AG04449 (cell line): ENCODE measurements at regions of chr12 and their contacts with region 1.

Region 1: GRCh38 chr12:127677537-127678131 is 589.3 kb upstream of the TMEM132C start:
- DNase-seq: peak; percentile 34
- H3K4me3 ChIP-seq: no peak overlapping the region
- CTCF ChIP-seq: peak; percentile 76

Region 2: DNA sequence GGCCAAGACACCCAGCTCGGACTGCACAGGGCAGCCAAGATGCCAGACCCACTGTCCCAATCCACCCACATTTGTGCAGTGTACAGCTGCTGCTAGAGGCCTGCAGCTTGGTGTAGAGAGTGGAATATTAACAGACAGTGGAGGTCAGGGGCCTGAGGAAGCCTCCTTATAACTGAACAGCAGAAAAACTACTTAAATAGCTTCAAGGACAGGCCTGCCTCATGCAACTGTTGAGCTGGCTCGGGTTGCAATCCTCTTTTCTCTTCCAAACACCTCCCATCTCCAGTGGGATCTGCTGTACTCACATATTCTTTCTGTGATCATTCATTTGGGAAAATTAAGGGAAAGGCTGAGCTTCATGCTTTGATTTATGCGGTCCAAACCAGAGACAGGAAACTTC is 453.9 kb before region 1 on chr12:
- CTCF ChIA-PET with region 1: no interaction called
- POLR2A ChIA-PET with region 1: no interaction called
- DNase-seq: no peak
- H3K4me3 ChIP-seq: no peak overlapping the region
- CTCF ChIP-seq: no peak

Region 3: DNA sequence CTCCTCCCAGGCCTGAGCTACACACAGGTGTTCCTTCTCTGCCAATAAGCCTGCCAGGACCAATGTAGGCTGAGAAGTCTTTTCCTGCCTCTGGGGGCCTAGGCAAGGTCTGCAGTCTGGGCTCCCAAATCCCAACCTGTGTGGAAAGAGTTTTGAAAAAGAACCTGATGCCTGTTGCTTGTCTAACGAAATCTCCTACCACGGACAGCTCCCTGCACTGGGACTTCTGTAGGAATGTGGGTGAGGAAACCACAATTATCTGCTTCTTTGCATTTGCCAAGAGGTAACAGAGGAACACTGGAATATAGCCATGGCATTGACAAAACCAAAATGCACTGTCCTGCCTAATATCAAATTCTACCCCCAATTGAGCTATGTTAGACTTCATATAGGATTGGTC is 287.7 kb before region 1 on chr12:
- CTCF ChIA-PET with region 1: interaction called, 21 read pairs
- POLR2A ChIA-PET with region 1: no interaction called
- DNase-seq: peak; percentile 36
- H3K4me3 ChIP-seq: no peak overlapping the region
- CTCF ChIP-seq: no peak

Region 4: DNA sequence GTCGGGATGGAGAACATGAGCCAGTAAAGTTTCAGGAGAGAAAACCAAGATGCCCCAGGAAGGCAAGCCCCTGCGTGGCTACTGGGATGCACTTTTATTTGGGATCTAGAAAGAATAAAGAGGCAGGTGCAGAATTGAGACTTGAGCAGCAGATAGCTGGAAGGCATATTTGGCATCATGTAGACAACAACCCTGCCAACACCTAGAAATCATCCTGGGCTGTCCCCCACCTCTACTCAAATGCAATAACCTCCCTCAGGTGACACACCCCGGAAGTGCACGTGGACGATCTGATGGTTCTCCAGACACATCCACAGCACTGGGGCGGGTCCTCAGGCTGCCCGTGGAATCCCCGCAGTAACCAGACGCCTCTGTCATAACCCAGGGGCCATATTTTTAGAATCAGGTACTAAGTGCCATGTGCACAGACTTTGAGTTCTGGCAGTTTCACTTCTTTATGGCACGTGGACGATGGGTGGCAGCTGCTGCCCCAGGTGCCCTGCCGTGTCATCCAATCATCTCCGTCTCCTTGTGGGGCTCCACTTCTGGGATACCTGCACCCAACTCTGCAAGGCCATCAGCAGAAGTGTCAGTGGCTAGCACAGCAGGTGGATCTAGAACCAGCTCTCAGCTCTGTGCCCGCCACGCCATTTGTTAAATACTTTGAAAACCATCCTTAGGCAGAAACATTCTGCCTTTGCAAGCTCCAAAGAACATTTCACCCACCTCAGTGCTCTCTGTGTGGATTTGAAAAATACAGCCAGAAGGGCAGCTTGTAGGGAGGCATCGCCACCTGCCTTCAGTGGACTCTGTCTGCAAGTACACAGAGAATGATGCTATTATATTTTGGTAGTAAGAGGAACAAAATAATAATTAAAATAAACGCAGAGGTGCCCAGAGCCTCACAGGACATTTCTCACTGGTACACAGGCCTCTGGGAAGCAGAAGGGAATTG is 182.4 kb before region 1 on chr12:
- CTCF ChIA-PET with region 1: interaction called, 20 read pairs
- POLR2A ChIA-PET with region 1: no interaction called
- DNase-seq: no peak
- H3K4me3 ChIP-seq: no peak overlapping the region
- CTCF ChIP-seq: no peak

Region 5: DNA sequence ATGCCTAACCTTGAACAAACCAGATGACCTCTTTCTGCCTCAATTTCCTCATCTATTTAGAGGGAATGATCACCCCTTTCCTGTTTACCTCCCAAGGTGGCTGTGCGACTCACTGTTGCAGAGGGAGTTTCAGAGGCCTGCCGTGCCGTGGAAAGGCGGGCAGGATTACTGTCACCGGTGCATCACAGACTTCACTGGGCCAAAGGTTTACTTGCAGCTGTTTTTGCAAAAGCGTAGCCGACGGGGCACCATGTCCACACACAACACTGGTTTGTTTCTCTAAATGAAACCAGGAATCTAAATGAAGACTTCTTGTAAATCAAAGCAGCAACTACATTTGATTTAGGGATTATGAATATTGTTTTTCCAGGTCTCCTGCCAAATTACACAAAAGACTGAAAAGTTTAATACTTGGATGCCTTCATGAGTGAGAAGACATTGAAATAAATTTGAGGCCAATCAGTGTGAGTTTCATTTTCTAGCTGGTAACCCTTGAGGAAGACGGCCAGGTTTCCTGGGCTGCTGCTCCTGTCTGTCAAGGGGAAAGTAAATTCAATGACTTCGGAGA is 106.8 kb before region 1 on chr12:
- CTCF ChIA-PET with region 1: no interaction called
- POLR2A ChIA-PET with region 1: no interaction called
- DNase-seq: no peak
- H3K4me3 ChIP-seq: no peak overlapping the region
- CTCF ChIP-seq: no peak

Region 6: GRCh38 chr12:127636882-127637281 is 40.8 kb before region 1 on chr12:
- CTCF ChIA-PET with region 1: interaction called, 19 read pairs
- POLR2A ChIA-PET with region 1: no interaction called
- DNase-seq: no peak
- H3K4me3 ChIP-seq: no peak overlapping the region
- CTCF ChIP-seq: no peak

Region 7: GRCh38 chr12:127690161-127690560 is 12.5 kb after region 1 on chr12:
- CTCF ChIA-PET with region 1: interaction called, 20 read pairs
- POLR2A ChIA-PET with region 1: no interaction called
- DNase-seq: no peak
- H3K4me3 ChIP-seq: no peak overlapping the region
- CTCF ChIP-seq: no peak

Region 8: DNA sequence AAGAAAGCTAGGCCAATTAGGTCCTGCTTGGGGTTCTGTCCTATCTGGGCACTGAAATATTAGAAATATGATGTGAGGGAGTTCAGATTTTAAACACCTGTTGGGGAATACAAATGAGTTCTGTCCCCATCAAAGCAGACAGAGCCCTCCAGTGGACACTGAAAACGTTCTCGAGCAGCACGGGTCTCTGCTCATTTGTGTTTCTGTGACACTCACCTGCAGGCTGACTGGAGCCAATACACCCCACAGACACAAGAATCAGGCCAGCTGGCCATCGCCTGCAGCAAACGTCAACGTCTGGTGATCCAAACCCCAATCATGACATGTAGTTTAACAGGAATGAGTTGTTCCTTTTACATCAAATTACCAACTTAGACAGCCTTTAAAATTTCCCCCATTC is 95.9 kb after region 1 on chr12:
- CTCF ChIA-PET with region 1: no interaction called
- POLR2A ChIA-PET with region 1: no interaction called
- DNase-seq: no peak
- H3K4me3 ChIP-seq: no peak overlapping the region
- CTCF ChIP-seq: no peak